GM23248 (cell line): ENCODE measurements at regions of chr4 and their contacts with region 1.

Region 1: DNA sequence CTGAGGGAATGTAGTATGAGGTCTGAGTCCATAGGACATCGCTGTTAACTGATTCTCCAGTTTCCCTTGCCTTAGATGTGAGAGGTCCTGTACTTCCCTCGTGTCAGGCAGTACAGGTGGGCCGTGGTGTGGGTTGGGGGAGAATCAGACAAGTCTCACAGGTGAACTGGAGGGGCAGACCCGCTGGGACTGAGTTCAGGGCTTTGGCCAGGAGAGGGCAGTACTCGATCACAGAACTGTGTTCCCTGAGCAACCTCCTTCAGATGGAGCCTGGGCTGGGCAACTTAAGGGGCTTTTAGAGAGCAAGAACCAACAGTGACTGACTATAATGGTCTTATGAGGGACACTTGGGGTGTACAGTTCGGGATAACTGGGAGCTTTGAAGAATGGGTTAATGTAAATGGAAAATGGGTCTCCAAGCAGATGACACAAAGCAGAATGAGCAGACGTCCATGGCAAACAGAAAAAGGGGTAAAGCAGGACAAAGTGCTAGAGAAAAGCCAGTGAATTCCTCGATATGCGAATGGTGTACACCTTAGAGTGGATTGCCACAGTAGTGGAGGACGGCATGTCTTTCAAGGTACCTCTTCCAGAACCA is 83.6 kb downstream of the CCNG2 start:
- DNase-seq: peak; percentile 76
- H3K4me3 ChIP-seq: no peak overlapping the region
- H3K27ac ChIP-seq: no peak overlapping the region
- H3K4me1 ChIP-seq: no peaks in the 10 kb centered on the region
- H3K27me3 ChIP-seq: peaks cover 60% of the 10 kb centered on the region

Region 2: GRCh38 chr4:77120886-77121508 is 119.6 kb before region 1 on chr4:
- in situ Hi-C with region 1: no loop called
- DNase-seq: peak; percentile 39
- H3K4me3 ChIP-seq: no peak overlapping the region
- H3K27ac ChIP-seq: no peak overlapping the region
- H3K4me1 ChIP-seq: no peaks in the 10 kb centered on the region
- H3K27me3 ChIP-seq: no peaks in the 10 kb centered on the region; the same call in 1 of the 2 replicates

Region 3: GRCh38 chr4:77358315-77358928 is 117.9 kb after region 1 on chr4:
- in situ Hi-C with region 1: loop called (anchors 5 kb)
- DNase-seq: peak; percentile 71
- H3K4me3 ChIP-seq: no peak overlapping the region
- H3K27ac ChIP-seq: no peak overlapping the region
- H3K4me1 ChIP-seq: no peaks in the 10 kb centered on the region
- H3K27me3 ChIP-seq: peaks cover 27% of the 10 kb centered on the region